ENCODE measurements at regions of chr9 and their contacts with region 1.

Region 1: DNA sequence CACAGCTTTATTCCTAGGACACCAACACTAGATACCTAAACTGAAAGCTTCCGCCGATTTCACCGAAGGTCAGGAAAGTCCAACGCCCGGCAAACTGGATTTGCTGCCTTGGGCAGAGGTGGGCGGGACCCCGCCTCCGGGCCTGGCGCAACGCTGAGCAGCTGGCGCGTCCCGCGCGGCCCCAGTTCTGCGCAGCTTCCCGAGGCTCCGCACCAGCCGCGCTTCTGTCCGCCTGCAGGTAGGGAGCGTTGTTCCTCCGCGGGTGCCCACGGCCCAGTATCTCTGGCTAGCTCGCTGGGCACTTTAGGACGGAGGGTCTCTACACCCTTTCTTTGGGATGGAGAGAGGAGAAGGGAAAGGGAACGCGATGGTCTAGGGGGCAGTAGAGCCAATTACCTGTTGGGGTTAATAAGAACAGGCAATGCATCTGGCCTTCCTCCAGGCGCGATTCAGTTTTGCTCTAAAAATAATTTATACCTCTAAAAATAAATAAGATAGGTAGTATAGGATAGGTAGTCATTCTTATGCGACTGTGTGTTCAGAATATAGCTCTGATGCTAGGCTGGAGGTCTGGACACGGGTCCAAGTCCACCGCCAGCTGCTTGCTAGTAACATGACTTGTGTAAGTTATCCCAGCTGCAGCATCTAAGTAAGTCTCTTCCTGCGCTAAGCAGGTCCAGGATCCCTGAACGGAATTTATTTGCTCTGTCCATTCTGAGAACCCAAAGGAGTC is at the start of gene CD274:
- DNase-seq: peak; percentile 85
- H3K4me3 Mint-ChIP-seq: peak within 1 kb of the TSS; percentile 96
- H3K27ac Mint-ChIP-seq: peak within 1 kb of the TSS; percentile 90
- H3K4me1 Mint-ChIP-seq: peaks cover 85% of the 10 kb centered on the region
- H3K27me3 Mint-ChIP-seq: no peaks in the 10 kb centered on the region
- total RNA-seq, gene CD274: 60.4 and 61.7 TPM in 2 replicates

Region 2: GRCh38 chr9:4792572-4793458 is 657.7 kb before region 1 on chr9 and contains the start of gene RCL1:
- intact Hi-C with region 1: loop called (anchors 5 kb)
- DNase-seq: peak; percentile 99
- H3K4me3 Mint-ChIP-seq: peak within 1 kb of the TSS; percentile 96
- H3K27ac Mint-ChIP-seq: peak within 1 kb of the TSS; percentile 96
- H3K4me1 Mint-ChIP-seq: peaks cover 62% of the 10 kb centered on the region
- H3K27me3 Mint-ChIP-seq: no peaks in the 10 kb centered on the region
- total RNA-seq, gene RCL1: 53.3 and 53.4 TPM in 2 replicates

Region 3: DNA sequence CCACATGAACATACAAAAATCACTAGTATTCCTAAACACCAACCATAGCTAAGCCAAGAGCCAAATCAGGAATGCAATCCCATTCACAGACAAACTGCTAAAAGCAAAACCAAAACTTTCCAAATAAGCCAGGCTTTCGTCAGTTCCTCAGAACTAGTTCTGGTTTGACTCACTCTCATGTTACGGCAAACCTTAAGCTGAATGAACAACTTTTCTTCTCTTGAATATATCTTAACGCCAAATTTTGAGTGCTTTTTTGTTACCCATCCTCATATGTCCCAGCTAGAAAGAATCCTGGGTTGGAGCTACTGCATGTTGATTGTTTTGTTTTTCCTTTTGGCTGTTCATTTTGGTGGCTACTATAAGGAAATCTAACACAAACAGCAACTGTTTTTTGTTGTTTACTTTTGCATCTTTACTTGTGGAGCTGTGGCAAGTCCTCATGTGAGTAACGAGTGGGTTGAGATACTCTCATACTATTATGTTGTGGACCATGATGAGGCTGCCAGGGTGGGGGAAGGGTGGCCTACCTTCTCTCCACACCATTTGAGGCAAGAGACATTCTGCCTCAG is 59.9 kb after region 1 on chr9 and contains the start of gene PDCD1LG2:
- intact Hi-C with region 1: loop called (anchors 1 kb)
- DNase-seq: peak; percentile 41
- H3K4me3 Mint-ChIP-seq: peak within 1 kb of the TSS; percentile 82
- H3K27ac Mint-ChIP-seq: peak within 1 kb of the TSS; percentile 96
- H3K4me1 Mint-ChIP-seq: peaks cover 68% of the 10 kb centered on the region
- H3K27me3 Mint-ChIP-seq: no peaks in the 10 kb centered on the region
- total RNA-seq, gene PDCD1LG2: 1.1 and 1.4 TPM in 2 replicates

Region 4: DNA sequence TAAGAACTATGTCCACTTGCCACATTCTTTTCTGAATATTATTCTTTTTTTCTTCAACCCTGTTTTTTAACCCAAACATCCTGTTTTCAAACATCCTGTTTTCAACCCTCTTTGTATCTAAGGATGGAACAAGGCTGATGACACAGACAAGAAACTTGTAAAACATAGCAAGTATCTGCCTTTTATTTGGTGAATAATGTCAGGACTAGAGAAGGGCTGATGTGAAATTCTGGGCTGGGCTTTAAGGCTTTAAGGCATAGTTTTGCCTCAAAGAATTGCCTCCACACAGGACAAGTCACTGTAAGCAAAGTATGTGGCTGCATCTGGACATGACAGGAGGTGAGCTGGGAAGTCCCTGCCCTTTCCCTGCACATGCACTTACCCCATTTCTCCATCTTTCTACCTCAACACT is 135.9 kb after region 1 on chr9:
- intact Hi-C with region 1: loop called (anchors 1 kb)
- DNase-seq: peak; percentile 26
- H3K4me3 Mint-ChIP-seq: peak overlapping the region; percentile 35
- H3K27ac Mint-ChIP-seq: peak overlapping the region; percentile 95
- H3K4me1 Mint-ChIP-seq: peaks cover 64% of the 10 kb centered on the region
- H3K27me3 Mint-ChIP-seq: no peaks in the 10 kb centered on the region

Region 5: GRCh38 chr9:5764130-5764868 is 313.8 kb after region 1 on chr9:
- intact Hi-C with region 1: loop called (anchors 10 kb)
- DNase-seq: no peak
- H3K4me3 Mint-ChIP-seq: peak overlapping the region; percentile 25
- H3K27ac Mint-ChIP-seq: peak overlapping the region; percentile 27
- H3K4me1 Mint-ChIP-seq: peaks cover 57% of the 10 kb centered on the region
- H3K27me3 Mint-ChIP-seq: no peaks in the 10 kb centered on the region

Measured in activated T-helper 1 cell treated with anti-CD3 and anti-CD28 coated beads, Interleukin-12 subunit alpha, Interleukin-12 subunit beta, Interleukin-2, Interleukin-4 antibody, amounts not matched to agents 30 ng/mL and 10 ng/mL and 1 ng/mL, durations not matched to agents 14 hours and 24 hours and 36 hours (primary cell).